Testis (tissue), 5 donors: ENCODE measurements at regions of chr17 and their contacts with region 1.

Region 1: DNA sequence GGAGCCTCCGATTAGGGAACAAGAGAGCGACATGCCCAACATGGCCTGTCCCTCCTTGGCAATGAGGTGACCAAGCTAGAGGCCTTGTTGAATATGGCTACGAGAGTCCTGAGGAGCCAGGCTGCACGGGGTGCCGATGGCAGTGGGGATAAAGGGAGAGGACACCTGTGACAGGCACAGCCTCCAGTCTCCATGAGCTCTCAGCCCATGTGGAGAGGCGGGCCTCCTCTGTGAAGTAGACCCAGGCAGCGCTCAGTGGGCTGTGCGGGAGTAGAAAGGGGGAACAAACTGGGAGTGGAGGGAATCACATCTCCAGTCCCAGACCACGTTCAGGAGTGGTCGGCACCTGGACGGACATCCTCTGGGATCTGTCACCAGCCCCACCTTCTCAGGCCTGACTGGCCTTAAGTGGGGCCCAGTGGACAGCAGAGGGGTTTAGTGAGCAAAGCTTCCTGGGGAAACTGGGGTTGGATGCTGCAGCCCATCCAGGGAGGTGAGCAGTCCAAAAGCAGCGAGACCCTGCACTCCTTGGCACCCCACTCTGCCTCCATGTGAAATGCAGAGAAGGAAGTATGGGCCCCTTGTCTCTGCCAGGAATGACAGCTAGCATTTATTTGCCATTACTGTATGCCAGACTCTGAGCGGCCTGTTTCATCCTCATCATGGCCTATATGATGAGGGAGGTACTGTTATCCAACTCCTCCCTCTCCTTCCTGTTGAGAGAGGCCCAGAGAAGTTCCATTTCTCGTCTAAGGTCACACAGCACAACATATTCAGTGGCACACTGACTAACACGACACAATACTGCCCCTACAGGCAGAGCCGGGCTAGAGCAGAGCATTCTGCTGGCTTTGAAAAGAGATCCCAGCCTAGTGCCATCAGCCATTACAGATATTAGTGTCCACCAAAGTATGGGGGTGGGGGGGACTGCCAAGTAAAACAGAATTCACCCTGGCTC is 4.5 kb upstream of the TMEM92 start:
- DNase-seq: peak; percentile 87
- H3K4me3 ChIP-seq: no peak overlapping the region
- H3K27ac ChIP-seq: peak overlapping the region; percentile 48 to 77
- H3K4me1 ChIP-seq: peaks cover 32% of the 10 kb centered on the region
- H3K27me3 ChIP-seq: no peaks in the 10 kb centered on the region
- CTCF ChIP-seq: peak; percentile 65 to 88 (median 68)
- POLR2A ChIP-seq: no peak

Region 2: GRCh38 chr17:50200457-50201275 is 69.1 kb before region 1 on chr17:
- intact Hi-C with region 1: loop called (anchors 5 kb)
- DNase-seq: peak; percentile 93
- H3K4me3 ChIP-seq: peak overlapping the region; percentile 74 to 83
- H3K27ac ChIP-seq: peak overlapping the region; percentile 86 to 92
- H3K4me1 ChIP-seq: peaks cover 36% of the 10 kb centered on the region
- H3K27me3 ChIP-seq: no peaks in the 10 kb centered on the region
- CTCF ChIP-seq: peak; percentile 100
- POLR2A ChIP-seq: no peak